ENCODE measurements at regions of chr1 and their contacts with region 1.

Region 1: GRCh38 chr1:79197421-79197820 is 190.9 kb upstream of the ADGRL4 start:
- DNase-seq: no peak
- ATAC-seq: no peak
- H3K4me3 ChIP-seq: no peak overlapping the region
- H3K27ac ChIP-seq: no peak overlapping the region
- H3K4me1 ChIP-seq: no peaks in the 10 kb centered on the region
- H3K27me3 ChIP-seq: no peaks in the 10 kb centered on the region

Region 2: GRCh38 chr1:78839704-78840277 is 357.6 kb before region 1 on chr1:
- intact Hi-C with region 1: loop called in 1 of 2 experiments (anchors 2 kb)
- DNase-seq: no peak
- ATAC-seq: no peak
- H3K4me3 ChIP-seq: no peak overlapping the region
- H3K27ac ChIP-seq: no peak overlapping the region
- H3K4me1 ChIP-seq: no peaks in the 10 kb centered on the region
- H3K27me3 ChIP-seq: no peaks in the 10 kb centered on the region

Measured in aorta (tissue), 5 donors.